Stomach (tissue), 19 donors: ENCODE measurements at regions of chr3 and their contacts with region 1.

Region 1: GRCh38 chr3:151816091-151816604 is 2.2 kb downstream of the AADAC start:
- DNase-seq: peak; percentile 52 to 90
- H3K4me3 ChIP-seq: no peak overlapping the region
- H3K27ac ChIP-seq: peak overlapping the region; percentile 38 to 73 (median 62)
- H3K4me1 ChIP-seq: peaks cover 0 to 19% (median 4%) of the 10 kb centered on the region in 4 donors
- H3K27me3 ChIP-seq: no peaks in the 10 kb centered on the region
- CTCF ChIP-seq: no peak
- EP300 ChIP-seq: no peak
- POLR2A ChIP-seq: no peak

Region 2: DNA sequence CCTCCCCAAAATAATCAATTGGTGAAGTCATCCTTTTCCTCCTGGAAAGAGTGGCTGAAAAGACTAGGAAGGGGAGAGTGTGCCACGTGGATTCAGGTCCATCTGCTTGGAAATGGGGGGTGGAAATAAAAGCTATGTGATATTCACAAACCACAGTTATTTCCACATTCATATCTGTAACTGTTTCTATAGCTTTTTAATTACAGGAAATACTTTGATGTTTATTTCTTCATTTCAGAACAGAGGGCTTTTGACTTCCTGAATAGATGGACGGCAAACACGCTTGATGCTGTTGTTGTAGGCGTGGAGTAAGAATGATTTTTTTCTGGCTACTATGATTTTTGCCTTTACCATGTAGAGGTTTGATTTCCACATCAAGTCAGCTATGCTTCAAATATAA is 72.3 kb before region 1 on chr3:
- intact Hi-C with region 1: loop called (anchors 5 kb)
- DNase-seq: no peak
- H3K4me3 ChIP-seq: no peak overlapping the region
- H3K27ac ChIP-seq: no peak overlapping the region
- H3K4me1 ChIP-seq: no peaks in the 10 kb centered on the region
- H3K27me3 ChIP-seq: no peaks in the 10 kb centered on the region
- CTCF ChIP-seq: no peak
- EP300 ChIP-seq: no peak
- POLR2A ChIP-seq: no peak